ENCODE measurements at regions of chr9 and their contacts with region 1.

Region 1: DNA sequence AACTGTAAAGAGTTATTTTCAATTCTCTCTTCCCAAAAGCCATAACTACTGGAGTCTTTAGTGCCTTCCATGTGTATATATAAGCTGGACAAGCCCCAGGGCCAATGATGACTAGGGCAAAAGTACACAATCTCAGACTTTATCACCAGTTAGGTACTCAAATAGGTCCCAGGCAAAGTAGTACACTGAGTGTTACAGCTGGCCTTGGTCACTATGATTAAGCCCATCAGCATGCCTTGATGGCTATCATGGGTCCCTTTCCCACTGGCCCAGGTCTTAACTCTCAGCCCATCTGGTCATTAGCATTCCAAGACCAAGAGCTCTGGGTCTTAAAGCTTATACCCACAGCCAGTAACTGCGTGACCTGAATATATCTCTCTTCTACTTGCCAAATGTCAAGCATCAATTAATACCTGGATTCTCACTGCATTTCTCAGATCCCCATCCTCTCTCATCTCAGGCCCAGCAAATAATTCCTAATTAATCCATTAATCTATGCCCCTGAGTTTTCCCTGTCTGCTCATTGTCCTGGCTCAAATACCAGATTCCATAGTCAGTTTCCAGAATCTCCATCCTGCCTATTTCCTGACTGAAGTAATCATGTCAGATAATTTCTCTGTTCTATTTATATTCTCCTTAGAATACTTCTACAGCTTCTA is 62.3 kb downstream of the NR6A1 start:
- DNase-seq: no peak
- H3K4me3 ChIP-seq: no peak overlapping the region
- H3K27ac ChIP-seq: no peak overlapping the region
- H3K4me1 ChIP-seq: peaks cover 2 to 16% (median 7%) of the 10 kb centered on the region in 4 experiments; a peak in 5 of 7 replicates
- H3K27me3 ChIP-seq: no peaks in the 10 kb centered on the region
- CTCF ChIP-seq: no peak
- EP300 ChIP-seq: no peak
- POLR2A ChIP-seq: no peak
- RAD21 ChIP-seq: no peak

Region 2: DNA sequence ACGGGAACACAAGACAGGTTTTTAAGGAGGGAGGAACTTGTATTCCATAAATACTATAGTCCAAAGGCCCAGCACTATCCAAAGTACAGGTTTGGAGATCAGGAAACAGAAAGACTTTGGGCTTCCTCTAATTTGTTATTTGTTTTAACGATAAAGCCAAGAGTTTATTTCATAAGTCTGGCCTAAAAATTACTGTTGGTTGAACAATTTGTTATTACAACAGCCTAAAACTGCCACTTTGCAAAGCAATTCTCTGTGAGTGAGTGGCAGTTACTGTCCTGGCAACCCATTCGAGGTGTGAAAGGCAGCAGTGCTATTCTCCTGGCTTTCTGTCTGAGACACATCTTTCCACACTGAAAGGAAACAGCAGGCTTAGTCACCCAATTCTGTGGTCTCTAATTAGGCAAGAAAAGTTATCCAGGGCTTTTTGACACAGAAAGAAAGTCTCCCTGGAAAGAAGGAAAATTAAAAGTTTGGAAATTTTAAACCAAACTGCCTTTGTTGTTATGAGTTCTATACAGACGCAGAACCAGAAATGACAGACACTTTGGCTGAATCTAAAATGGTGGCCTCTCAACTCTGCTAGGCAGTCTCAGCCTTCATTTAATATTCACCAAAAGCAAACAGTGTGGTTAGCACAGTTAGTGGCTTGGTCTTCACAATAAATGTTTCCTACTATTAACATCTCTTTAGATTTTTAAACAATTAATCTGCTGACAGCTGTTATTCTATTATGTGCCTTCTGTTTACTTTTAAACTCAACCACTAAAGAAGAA is 327.4 kb before region 1 on chr9:
- CTCF ChIA-PET with region 1: no interaction called
- POLR2A ChIA-PET with region 1: no interaction called
- DNase-seq: no peak
- H3K4me3 ChIP-seq: no peak overlapping the region
- H3K27ac ChIP-seq: no peak overlapping the region
- H3K4me1 ChIP-seq: no peaks in the 10 kb centered on the region
- H3K27me3 ChIP-seq: no peaks in the 10 kb centered on the region
- CTCF ChIP-seq: no peak
- EP300 ChIP-seq: no peak
- POLR2A ChIP-seq: no peak
- RAD21 ChIP-seq: no peak

Region 3: GRCh38 chr9:124392871-124393460 is 315.8 kb before region 1 on chr9:
- CTCF ChIA-PET with region 1: no interaction called
- POLR2A ChIA-PET with region 1: no interaction called
- DNase-seq: no peak
- H3K4me3 ChIP-seq: no peak overlapping the region
- H3K27ac ChIP-seq: no peak overlapping the region
- H3K4me1 ChIP-seq: peaks cover 3 to 16% (median 9%) of the 10 kb centered on the region in 4 experiments; a peak in 5 of 7 replicates
- H3K27me3 ChIP-seq: no peaks in the 10 kb centered on the region
- CTCF ChIP-seq: peak; percentile 39 to 55 (median 43); a peak in 3 of 4 replicates
- EP300 ChIP-seq: no peak
- POLR2A ChIP-seq: no peak
- RAD21 ChIP-seq: peak; percentile 44 to 63; a peak in 3 of 4 replicates

Region 4: GRCh38 chr9:124513376-124513994 is 195.3 kb before region 1 on chr9:
- CTCF ChIA-PET with region 1: interaction called, 13 read pairs
- POLR2A ChIA-PET with region 1: no interaction called
- DNase-seq: peak in 1 of 2 experiments; percentile 49
- H3K4me3 ChIP-seq: no peak overlapping the region
- H3K27ac ChIP-seq: no peak overlapping the region
- H3K4me1 ChIP-seq: peaks cover 0 to 18% (median 4%) of the 10 kb centered on the region in 4 experiments; a peak in 5 of 7 replicates
- H3K27me3 ChIP-seq: no peaks in the 10 kb centered on the region
- CTCF ChIP-seq: no peak
- EP300 ChIP-seq: no peak
- POLR2A ChIP-seq: no peak
- RAD21 ChIP-seq: no peak

Region 5: DNA sequence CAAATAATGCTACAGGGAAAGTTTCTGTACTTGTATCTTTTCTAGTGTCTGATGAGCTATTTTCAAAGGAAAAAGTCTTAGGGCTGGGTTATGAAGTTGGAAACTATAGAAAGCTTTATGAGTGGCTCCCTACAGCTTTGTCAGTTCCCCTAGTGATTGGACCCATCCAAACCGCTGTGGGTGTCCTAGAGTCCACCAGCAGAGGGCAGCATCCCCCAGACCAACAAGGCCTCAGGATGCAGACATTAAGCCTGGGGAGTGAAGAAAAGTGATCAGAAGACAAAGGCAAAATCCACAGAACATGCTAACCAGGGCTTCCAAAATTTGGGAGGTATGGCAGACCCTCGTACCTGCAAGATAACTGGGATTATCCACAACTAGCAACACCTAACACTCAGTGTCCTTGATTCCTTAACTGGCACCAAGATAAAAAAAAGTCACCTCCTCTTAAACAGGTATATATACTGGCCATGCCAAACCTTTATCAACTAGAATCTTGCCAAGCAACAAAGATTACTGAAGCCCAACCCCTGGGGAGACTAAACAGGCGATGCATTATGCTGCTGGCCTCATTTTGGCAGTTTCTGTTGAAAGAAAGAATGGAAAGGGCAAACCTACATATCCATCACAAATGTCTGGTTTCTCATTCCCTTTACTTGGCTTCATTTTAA is 91.2 kb before region 1 on chr9:
- CTCF ChIA-PET with region 1: interaction called, 112 read pairs
- POLR2A ChIA-PET with region 1: interaction called, 3 read pairs
- DNase-seq: peak; percentile 58 to 93
- H3K4me3 ChIP-seq: peak overlapping the region in 1 of 4 experiments; percentile 16; a peak in 1 of 8 replicates
- H3K27ac ChIP-seq: peak overlapping the region; percentile 30
- H3K4me1 ChIP-seq: peaks cover 0 to 21% (median 10%) of the 10 kb centered on the region in 4 experiments; a peak in 4 of 7 replicates
- H3K27me3 ChIP-seq: no peaks in the 10 kb centered on the region
- CTCF ChIP-seq: peak; percentile 89 to 94 (median 89)
- EP300 ChIP-seq: no peak
- POLR2A ChIP-seq: no peak
- RAD21 ChIP-seq: peak; percentile 92 to 97

Region 6: DNA sequence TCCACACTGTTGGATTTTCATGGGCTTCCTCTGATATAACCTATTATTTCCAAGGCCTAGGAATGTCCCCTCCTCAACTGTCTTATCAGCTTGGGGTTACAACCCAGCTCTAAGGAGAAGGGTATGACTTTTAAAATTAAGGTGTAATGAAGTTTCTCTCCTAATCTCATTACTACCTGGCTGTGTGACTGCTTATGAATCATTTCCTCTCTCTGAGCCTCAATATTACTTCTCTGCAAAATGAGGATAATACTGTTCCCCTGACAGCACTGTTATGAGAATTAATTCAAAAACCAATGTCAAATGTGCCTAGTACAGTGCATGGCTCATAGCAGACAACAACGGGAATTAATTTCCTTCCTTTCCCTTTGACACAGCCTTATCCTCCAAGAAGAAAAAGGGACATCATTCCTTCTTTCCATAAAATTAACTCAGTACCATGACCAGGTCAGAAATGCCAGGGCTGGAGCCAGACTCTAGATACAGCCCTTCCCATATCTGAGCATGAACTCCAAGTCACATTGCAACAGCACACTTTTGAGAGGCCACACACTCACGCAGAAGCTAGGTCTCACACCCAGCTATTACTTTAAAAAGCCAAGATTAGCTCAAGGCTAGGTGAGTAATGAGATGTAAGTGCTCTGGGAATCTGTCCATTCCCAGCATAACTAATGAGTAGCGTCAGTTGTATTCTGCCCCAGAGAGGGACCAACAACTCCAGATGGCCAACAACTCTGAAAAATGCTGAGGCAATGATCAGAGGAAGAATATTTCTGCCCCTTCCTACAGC is 56.4 kb before region 1 on chr9:
- CTCF ChIA-PET with region 1: interaction called, 14 read pairs
- POLR2A ChIA-PET with region 1: no interaction called
- DNase-seq: no peak
- H3K4me3 ChIP-seq: no peak overlapping the region
- H3K27ac ChIP-seq: no peak overlapping the region
- H3K4me1 ChIP-seq: no peaks in the 10 kb centered on the region
- H3K27me3 ChIP-seq: no peaks in the 10 kb centered on the region
- CTCF ChIP-seq: no peak
- EP300 ChIP-seq: no peak
- POLR2A ChIP-seq: no peak
- RAD21 ChIP-seq: no peak

Region 7: DNA sequence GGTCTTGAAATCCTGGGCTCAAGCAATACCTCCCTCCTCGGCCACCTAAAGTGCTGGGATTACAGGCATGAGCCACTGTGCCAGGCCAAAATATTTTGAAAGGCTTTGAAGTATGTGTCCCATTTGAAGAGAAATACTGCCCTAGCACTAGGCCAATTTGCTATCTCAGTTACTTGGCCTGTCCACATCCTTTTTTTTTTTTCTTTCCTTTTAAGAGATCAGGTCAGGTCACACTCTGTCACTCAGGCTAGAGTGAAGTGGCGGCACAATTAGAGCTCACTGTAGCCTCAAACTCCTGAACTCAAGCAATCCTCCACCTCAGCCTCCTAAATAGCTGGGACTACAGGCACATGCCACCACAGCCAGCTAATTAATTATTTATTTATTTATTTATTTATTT is 21.8 kb before region 1 on chr9:
- CTCF ChIA-PET with region 1: interaction called, 14 read pairs
- POLR2A ChIA-PET with region 1: no interaction called
- DNase-seq: no peak
- H3K4me3 ChIP-seq: no peak overlapping the region
- H3K27ac ChIP-seq: no peak overlapping the region
- H3K4me1 ChIP-seq: no peaks in the 10 kb centered on the region
- H3K27me3 ChIP-seq: no peaks in the 10 kb centered on the region
- CTCF ChIP-seq: no peak
- EP300 ChIP-seq: no peak
- POLR2A ChIP-seq: no peak
- RAD21 ChIP-seq: no peak

Region 8: DNA sequence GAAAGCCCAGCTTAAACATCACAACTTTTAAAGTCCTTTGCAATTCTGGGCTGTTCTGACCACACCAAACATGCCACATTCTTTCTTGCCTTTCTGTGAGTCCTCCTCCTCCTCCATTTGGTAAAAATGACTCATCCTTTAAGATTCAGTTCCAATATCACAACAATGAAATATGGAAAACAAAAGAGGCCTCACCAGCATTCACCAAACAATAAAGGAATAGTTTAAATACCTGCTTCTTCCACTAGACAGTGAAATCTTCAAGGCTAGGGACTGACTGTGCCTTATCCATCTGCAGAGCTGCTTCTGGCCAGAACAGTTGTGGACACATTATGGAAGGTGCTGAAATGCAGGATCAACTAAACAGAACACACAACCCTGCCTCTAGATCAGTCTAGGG is 26.4 kb after region 1 on chr9:
- CTCF ChIA-PET with region 1: interaction called, 19 read pairs
- POLR2A ChIA-PET with region 1: interaction called, 3 read pairs
- DNase-seq: no peak
- H3K4me3 ChIP-seq: no peak overlapping the region
- H3K27ac ChIP-seq: 0 out of 2 replicates have a peak overlapping the region, but pooled peaks have one; percentile 12
- H3K4me1 ChIP-seq: peaks cover 6 to 19% (median 9%) of the 10 kb centered on the region in 4 experiments; a peak in 6 of 7 replicates
- H3K27me3 ChIP-seq: no peaks in the 10 kb centered on the region
- CTCF ChIP-seq: no peak
- EP300 ChIP-seq: no peak
- POLR2A ChIP-seq: no peak
- RAD21 ChIP-seq: no peak

Region 9: GRCh38 chr9:124758061-124758460 is 49.3 kb after region 1 on chr9:
- CTCF ChIA-PET with region 1: interaction called, 11 read pairs
- POLR2A ChIA-PET with region 1: no interaction called
- DNase-seq: no peak
- H3K4me3 ChIP-seq: peak overlapping the region; percentile 22 to 56 (median 24); a peak in 6 of 8 replicates
- H3K27ac ChIP-seq: peak overlapping the region; percentile 46; the same call in 1 of the 2 replicates
- H3K4me1 ChIP-seq: peaks cover 15 to 55% (median 29%) of the 10 kb centered on the region in 4 experiments
- H3K27me3 ChIP-seq: no peaks in the 10 kb centered on the region
- CTCF ChIP-seq: no peak
- EP300 ChIP-seq: peak in 1 of 2 experiments; percentile 51; a peak in 1 of 3 replicates
- POLR2A ChIP-seq: no peak
- RAD21 ChIP-seq: no peak

Region 10: DNA sequence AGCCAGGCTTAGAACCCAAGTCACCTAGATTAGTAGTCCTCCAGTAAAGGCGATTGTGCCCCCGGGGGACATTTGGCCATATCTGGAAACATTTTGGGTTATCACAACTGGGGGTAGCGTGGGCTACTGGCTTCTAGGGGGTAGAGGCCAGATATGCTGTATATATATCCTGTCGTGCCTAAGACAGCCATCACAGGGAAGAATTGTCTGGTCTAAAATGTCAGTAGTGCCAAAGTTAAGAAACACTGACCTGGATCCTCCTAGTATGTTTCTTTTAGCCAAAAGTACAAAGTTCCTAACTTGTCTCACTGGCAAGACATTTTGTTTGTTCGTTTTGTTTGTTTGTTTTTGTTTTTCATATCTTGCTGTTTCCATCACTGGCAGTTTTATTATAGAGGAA is 505.4 kb after region 1 on chr9:
- CTCF ChIA-PET with region 1: no interaction called
- POLR2A ChIA-PET with region 1: no interaction called
- DNase-seq: no peak
- H3K4me3 ChIP-seq: no peak overlapping the region
- H3K27ac ChIP-seq: no peak overlapping the region
- H3K4me1 ChIP-seq: no peaks in the 10 kb centered on the region
- H3K27me3 ChIP-seq: no peaks in the 10 kb centered on the region
- CTCF ChIP-seq: no peak
- EP300 ChIP-seq: no peak
- POLR2A ChIP-seq: no peak
- RAD21 ChIP-seq: no peak